Testis (tissue), 5 donors: ENCODE measurements at regions of chr14 and their contacts with region 1.

Region 1: DNA sequence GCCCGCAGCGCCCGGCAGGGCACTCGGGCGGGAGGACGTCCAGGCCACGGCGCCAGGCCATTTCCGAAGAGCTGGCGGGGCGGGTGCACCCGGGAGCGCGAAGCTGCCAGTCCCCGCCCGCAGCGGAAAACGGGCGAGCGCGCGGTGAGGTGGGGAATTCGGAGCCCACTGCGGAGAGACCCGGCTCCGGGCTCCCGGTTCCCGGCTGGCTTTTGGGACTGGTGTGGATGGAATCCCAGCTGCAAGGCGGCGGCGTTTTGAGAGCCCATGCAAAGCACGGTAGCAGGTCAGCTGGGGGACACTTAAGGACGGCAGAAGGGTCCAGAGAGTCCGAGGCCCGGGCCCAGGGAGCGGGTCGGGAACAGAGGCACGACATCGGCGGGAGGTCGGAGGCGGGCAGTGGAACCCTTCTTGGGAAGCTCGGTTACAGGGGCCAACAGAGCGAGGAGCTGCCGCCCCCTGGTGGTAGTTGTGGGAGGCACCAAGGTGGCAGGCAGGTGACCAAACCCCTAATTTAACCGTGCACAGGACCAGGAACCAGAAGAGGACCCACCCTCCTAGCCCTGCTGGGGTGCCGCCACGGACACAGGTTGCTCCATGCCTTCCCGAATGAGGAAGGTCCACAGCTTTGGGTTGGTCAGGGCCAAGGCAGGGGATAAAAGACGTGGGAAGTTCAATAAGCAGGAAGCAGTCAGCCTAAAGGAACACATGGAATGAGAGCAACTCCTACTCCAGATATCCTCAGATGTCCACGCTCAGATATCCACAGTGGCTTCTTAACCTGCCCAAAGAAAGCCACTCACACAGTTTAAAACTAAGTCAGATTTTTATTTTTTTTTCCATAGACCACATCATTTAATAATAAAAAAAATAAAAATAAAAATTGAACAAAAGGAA is 685 bp upstream of the CDH24 start:
- DNase-seq: peak; percentile 92
- H3K4me3 ChIP-seq: peak overlapping the region; percentile 68 to 70
- H3K27ac ChIP-seq: peak overlapping the region in 1 of 2 donors; percentile 59
- H3K4me1 ChIP-seq: peaks cover 17% of the 10 kb centered on the region
- H3K27me3 ChIP-seq: no peaks in the 10 kb centered on the region
- CTCF ChIP-seq: peak; percentile 93 to 96 (median 95)
- POLR2A ChIP-seq: no peak

Region 2: DNA sequence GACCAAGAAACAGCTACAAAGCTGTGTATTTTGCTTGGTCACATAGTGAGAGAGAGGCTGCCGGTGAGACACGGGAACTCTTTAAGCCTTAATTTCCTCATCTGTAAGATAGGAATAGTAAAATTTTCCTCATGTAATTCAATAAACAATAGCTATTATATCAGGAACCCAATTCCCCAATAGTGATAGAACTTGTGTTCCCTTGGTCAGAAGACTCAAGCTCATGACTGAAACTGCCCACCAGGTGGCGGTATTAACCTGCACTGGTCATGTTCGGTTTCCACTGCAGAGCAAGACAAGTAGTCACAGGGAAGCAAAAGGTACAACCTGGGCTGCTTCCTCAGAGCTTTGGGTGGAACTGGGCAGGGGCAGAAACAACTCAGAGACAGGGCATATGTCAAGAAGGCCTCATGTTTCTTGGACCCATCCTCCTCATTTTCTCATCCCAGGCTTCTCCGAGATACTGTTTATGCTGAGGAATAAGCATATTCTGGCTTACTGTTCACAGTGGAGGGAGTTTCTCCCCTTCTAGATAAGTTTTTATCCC is 71.4 kb before region 1 on chr14:
- intact Hi-C with region 1: loop called (anchors 5 kb)
- DNase-seq: peak; percentile 96
- H3K4me3 ChIP-seq: no peak overlapping the region
- H3K27ac ChIP-seq: no peak overlapping the region
- H3K4me1 ChIP-seq: no peaks in the 10 kb centered on the region
- H3K27me3 ChIP-seq: no peaks in the 10 kb centered on the region
- CTCF ChIP-seq: peak; percentile 93 to 95 (median 94)
- POLR2A ChIP-seq: no peak